H1 (cell line): ENCODE measurements at regions of chr2 and their contacts with region 1.

Region 1: DNA sequence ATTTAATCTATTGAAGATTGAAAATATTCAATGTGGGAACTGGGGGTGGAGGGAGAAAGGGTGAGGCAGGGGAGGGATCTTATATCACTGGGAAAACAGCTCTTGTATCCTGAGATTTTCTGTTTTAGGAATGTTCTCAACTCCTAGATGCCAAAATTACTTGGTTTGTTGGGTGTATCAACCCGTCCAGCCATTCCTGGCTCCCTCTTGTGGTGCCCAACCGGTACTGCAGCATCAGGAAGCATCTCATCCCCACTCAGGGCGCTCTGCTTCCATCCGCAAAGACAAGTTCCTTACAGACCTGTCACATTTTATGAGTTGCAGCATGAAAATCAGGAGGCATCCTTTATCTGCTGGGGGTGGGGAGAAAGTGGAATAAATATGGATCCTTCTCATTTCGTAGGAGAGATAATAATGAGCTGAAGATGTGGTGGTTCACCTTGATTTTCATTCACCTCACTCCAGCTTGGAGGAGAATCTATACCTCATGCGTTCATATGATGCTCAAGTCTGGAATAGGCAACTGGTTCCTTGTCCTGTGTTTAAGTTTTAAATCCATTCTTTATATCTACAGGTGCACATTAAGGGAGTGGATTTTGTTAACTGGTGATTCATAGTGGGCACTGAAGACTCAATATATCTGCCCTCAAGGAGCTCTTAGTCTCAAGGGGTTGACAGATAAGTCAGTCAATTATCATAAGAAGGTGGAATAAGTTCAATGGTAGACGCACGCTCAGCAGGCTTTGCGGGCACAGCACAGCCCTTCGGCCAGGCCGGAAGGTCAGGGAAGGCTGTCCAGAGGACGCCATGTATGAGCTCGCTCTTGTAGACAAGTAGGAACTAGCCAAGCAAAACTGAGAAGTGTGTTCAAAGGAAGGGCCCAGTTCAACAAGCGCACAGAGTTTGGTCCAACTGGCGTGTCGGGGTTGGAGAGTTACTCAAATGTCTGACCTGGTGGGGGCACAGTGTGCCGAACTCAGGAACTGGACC is 127.3 kb downstream of the RNF144A start:
- DNase-seq: peak; percentile 19 to 80
- H3K4me3 ChIP-seq: no peak overlapping the region
- H3K27ac ChIP-seq: no peak overlapping the region
- H3K4me1 ChIP-seq: peaks cover 0 to 6% (median 2%) of the 10 kb centered on the region in 4 experiments; a peak in 3 of 7 replicates
- H3K27me3 ChIP-seq: no peaks in the 10 kb centered on the region
- CTCF ChIP-seq: peak; percentile 78 to 96 (median 95)
- EP300 ChIP-seq: no peak
- POLR2A ChIP-seq: no peak
- RAD21 ChIP-seq: peak; percentile 59 to 71

Region 2: GRCh38 chr2:6917071-6917760 is 127.3 kb before region 1 on chr2 and contains the start of gene RNF144A:
- CTCF ChIA-PET with region 1: interaction called, 11 read pairs
- POLR2A ChIA-PET with region 1: no interaction called
- DNase-seq: peak in 1 of 2 experiments; percentile 87
- H3K4me3 ChIP-seq: peak within 1 kb of the TSS; percentile 49 to 90 (median 60)
- H3K27ac ChIP-seq: no peak within 1 kb of the TSS; the same call in 1 of the 2 replicates
- H3K4me1 ChIP-seq: peaks cover 5 to 17% (median 9%) of the 10 kb centered on the region in 4 experiments
- H3K27me3 ChIP-seq: peaks cover 0 to 12% (median under 1%) of the 10 kb centered on the region in 4 experiments; a peak in 2 of 7 replicates
- CTCF ChIP-seq: peak; percentile 43 to 62 (median 53)
- EP300 ChIP-seq: no peak
- POLR2A ChIP-seq: no peak; a peak in 2 of 3 replicates
- RAD21 ChIP-seq: peak in 1 of 2 experiments; percentile 4; a peak in 1 of 4 replicates
- total RNA-seq, gene RNF144A: 15.0 and 15.1 TPM in 2 replicates

Region 3: DNA sequence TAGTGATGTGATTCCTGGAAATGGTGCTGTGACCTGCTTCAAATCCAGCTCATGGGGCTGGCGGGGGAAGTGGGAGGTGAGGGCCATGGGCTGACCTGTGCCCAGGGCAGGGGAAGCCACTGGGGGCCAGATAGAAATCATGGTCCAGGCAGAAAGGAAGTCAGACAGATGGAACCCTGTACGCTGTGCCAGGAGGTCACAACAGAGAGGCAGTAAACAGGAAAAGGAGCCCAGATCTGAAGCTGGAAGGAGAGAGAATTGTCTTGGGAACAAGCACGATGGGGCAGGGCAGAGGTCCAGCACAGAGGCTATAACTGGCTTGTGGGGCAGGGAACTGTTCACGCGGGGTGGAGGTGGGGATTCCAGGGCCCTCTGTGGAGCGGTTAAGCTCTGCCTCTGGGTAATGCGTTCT is 51.3 kb before region 1 on chr2:
- CTCF ChIA-PET with region 1: interaction called, 10 read pairs
- POLR2A ChIA-PET with region 1: no interaction called
- DNase-seq: no peak
- H3K4me3 ChIP-seq: no peak overlapping the region
- H3K27ac ChIP-seq: no peak overlapping the region
- H3K4me1 ChIP-seq: no peaks in the 10 kb centered on the region; a peak in 2 of 7 replicates
- H3K27me3 ChIP-seq: no peaks in the 10 kb centered on the region
- CTCF ChIP-seq: no peak
- EP300 ChIP-seq: no peak
- POLR2A ChIP-seq: no peak
- RAD21 ChIP-seq: no peak

Region 4: GRCh38 chr2:7023542-7023941 is 21.0 kb before region 1 on chr2:
- CTCF ChIA-PET with region 1: interaction called, 115 read pairs
- POLR2A ChIA-PET with region 1: no interaction called
- DNase-seq: no peak
- H3K4me3 ChIP-seq: no peak overlapping the region
- H3K27ac ChIP-seq: no peak overlapping the region
- H3K4me1 ChIP-seq: no peaks in the 10 kb centered on the region
- H3K27me3 ChIP-seq: no peaks in the 10 kb centered on the region
- CTCF ChIP-seq: no peak
- EP300 ChIP-seq: no peak
- POLR2A ChIP-seq: no peak
- RAD21 ChIP-seq: no peak

Region 5: GRCh38 chr2:7057865-7058400 is 13.4 kb after region 1 on chr2:
- CTCF ChIA-PET with region 1: interaction called, 40 read pairs
- POLR2A ChIA-PET with region 1: no interaction called
- DNase-seq: no peak
- H3K4me3 ChIP-seq: no peak overlapping the region
- H3K27ac ChIP-seq: no peak overlapping the region
- H3K4me1 ChIP-seq: peaks cover 0 to 10% (median 3%) of the 10 kb centered on the region in 4 experiments; a peak in 3 of 7 replicates
- H3K27me3 ChIP-seq: no peaks in the 10 kb centered on the region
- CTCF ChIP-seq: no peak
- EP300 ChIP-seq: no peak
- POLR2A ChIP-seq: no peak
- RAD21 ChIP-seq: no peak

Region 6: GRCh38 chr2:7118606-7119503 is 74.3 kb after region 1 on chr2:
- CTCF ChIA-PET with region 1: no interaction called
- POLR2A ChIA-PET with region 1: no interaction called
- DNase-seq: no peak
- H3K4me3 ChIP-seq: no peak overlapping the region
- H3K27ac ChIP-seq: no peak overlapping the region
- H3K4me1 ChIP-seq: no peaks in the 10 kb centered on the region; a peak in 2 of 7 replicates
- H3K27me3 ChIP-seq: no peaks in the 10 kb centered on the region
- CTCF ChIP-seq: peak; percentile 39 to 63 (median 60)
- EP300 ChIP-seq: no peak
- POLR2A ChIP-seq: no peak
- RAD21 ChIP-seq: peak; percentile 86 to 90

Region 7: GRCh38 chr2:7191932-7192331 is 147.4 kb after region 1 on chr2:
- CTCF ChIA-PET with region 1: no interaction called
- POLR2A ChIA-PET with region 1: no interaction called
- DNase-seq: no peak
- H3K4me3 ChIP-seq: no peak overlapping the region
- H3K27ac ChIP-seq: no peak overlapping the region
- H3K4me1 ChIP-seq: peaks cover 0 to 5% (median 0%) of the 10 kb centered on the region in 4 experiments; a peak in 5 of 7 replicates
- H3K27me3 ChIP-seq: peaks cover 0 to 5% (median 0%) of the 10 kb centered on the region in 4 experiments; a peak in 1 of 7 replicates
- CTCF ChIP-seq: no peak
- EP300 ChIP-seq: no peak
- POLR2A ChIP-seq: no peak
- RAD21 ChIP-seq: no peak